Activated CD4-positive, alpha-beta T cell treated with anti-CD3 and anti-CD28 coated beads for 36 hours (primary cell): ENCODE measurements at regions of chr15 and their contacts with region 1.

Region 1: GRCh38 chr15:68550481-68551295 is 28.1 kb upstream of the CORO2B start:
- DNase-seq: peak; percentile 89
- ATAC-seq: no peak
- H3K4me3 Mint-ChIP-seq: no peak overlapping the region
- H3K27ac Mint-ChIP-seq: no peak overlapping the region
- H3K4me1 Mint-ChIP-seq: peaks cover 6% of the 10 kb centered on the region
- H3K27me3 Mint-ChIP-seq: peaks cover 29% of the 10 kb centered on the region

Region 2: DNA sequence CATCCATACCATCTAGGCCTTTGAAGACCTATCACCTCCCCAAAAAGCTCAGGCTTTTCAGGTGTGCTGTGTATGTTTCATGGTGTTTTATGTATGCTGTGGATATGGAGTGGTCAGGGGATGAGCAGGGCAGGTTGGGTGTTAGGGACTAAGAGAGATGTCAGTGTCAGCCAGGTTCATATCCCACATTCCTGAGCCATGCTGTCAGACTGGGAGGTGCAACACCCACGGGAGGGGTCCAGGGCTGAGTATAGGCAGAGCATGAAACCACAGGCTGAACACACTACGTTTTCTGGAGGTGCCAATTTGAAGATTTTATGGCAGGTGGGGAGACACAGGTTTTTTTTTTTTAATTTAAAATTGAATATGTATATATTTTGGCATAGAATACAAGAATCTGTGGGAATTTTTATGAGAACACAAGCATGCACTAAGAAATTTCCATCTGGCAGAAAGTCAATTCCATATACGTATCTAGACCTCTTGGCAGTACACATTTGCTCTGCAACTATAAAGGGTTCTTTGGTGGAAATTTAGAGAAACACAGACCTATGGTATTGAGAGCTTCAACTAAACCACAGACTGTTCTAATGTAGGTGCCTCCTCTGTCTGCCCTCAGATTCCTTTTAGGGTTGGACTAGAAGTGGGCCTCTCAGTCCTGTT is 608.9 kb before region 1 on chr15:
- CTCF ChIA-PET with region 1: no interaction called
- POLR2A ChIA-PET with region 1: no interaction called
- intact Hi-C with region 1: no loop called
- DNase-seq: no peak
- ATAC-seq: no peak
- H3K4me3 Mint-ChIP-seq: no peak overlapping the region
- H3K27ac Mint-ChIP-seq: no peak overlapping the region
- H3K4me1 Mint-ChIP-seq: peaks cover 7% of the 10 kb centered on the region
- H3K27me3 Mint-ChIP-seq: no peaks in the 10 kb centered on the region

Region 3: GRCh38 chr15:68526269-68526668 is 24.4 kb before region 1 on chr15:
- CTCF ChIA-PET with region 1: interaction called, 5 read pairs
- POLR2A ChIA-PET with region 1: no interaction called
- intact Hi-C with region 1: loop called in 1 of 2 experiments (anchors 2 kb)
- DNase-seq: no peak
- ATAC-seq: peak; percentile 90
- H3K4me3 Mint-ChIP-seq: no peak overlapping the region
- H3K27ac Mint-ChIP-seq: no peak overlapping the region
- H3K4me1 Mint-ChIP-seq: peaks cover 17% of the 10 kb centered on the region
- H3K27me3 Mint-ChIP-seq: peaks cover 7% of the 10 kb centered on the region

Region 4: GRCh38 chr15:68538291-68538690 is 12.4 kb before region 1 on chr15:
- CTCF ChIA-PET with region 1: interaction called, 19 read pairs
- POLR2A ChIA-PET with region 1: no interaction called
- intact Hi-C with region 1: no loop called
- DNase-seq: no peak
- ATAC-seq: no peak
- H3K4me3 Mint-ChIP-seq: no peak overlapping the region
- H3K27ac Mint-ChIP-seq: no peak overlapping the region
- H3K4me1 Mint-ChIP-seq: no peaks in the 10 kb centered on the region
- H3K27me3 Mint-ChIP-seq: peaks cover 9% of the 10 kb centered on the region

Region 5: GRCh38 chr15:68586274-68586961 is 35.7 kb after region 1 on chr15:
- CTCF ChIA-PET with region 1: no interaction called
- POLR2A ChIA-PET with region 1: no interaction called
- intact Hi-C with region 1: no loop called
- DNase-seq: peak; percentile 47
- ATAC-seq: peak; percentile 54
- H3K4me3 Mint-ChIP-seq: no peak overlapping the region
- H3K27ac Mint-ChIP-seq: peak overlapping the region; percentile 42
- H3K4me1 Mint-ChIP-seq: peaks cover 25% of the 10 kb centered on the region
- H3K27me3 Mint-ChIP-seq: peaks cover 4% of the 10 kb centered on the region

Region 6: DNA sequence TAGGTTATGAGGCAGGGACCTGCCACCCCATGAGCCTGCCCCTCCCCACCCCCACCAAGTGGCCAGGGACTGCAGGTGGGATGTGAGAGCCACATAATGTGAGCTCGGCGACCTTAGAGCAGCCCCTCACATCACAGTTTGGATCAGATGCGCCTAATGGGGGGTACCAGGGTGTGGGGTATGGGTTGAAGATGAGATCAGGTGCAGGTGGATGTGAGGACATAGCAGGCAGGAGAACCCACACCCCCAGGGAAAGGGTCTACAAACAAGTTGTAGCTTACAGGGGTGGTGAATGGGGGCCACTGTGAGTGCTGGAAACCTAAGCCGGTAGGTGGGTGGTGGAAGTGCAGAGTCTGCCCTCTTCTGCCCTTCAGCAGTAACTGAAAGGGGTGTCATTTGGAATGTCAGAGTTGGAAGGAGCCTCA is 122.1 kb after region 1 on chr15:
- CTCF ChIA-PET with region 1: interaction called, 124 read pairs
- POLR2A ChIA-PET with region 1: no interaction called
- intact Hi-C with region 1: loop called (anchors 1 to 2 kb)
- DNase-seq: no peak
- ATAC-seq: no peak
- H3K4me3 Mint-ChIP-seq: no peak overlapping the region
- H3K27ac Mint-ChIP-seq: no peak overlapping the region
- H3K4me1 Mint-ChIP-seq: peaks cover 4% of the 10 kb centered on the region
- H3K27me3 Mint-ChIP-seq: peaks cover 9% of the 10 kb centered on the region